ENCODE measurements at regions of chr17 and their contacts with region 1.

Region 1: DNA sequence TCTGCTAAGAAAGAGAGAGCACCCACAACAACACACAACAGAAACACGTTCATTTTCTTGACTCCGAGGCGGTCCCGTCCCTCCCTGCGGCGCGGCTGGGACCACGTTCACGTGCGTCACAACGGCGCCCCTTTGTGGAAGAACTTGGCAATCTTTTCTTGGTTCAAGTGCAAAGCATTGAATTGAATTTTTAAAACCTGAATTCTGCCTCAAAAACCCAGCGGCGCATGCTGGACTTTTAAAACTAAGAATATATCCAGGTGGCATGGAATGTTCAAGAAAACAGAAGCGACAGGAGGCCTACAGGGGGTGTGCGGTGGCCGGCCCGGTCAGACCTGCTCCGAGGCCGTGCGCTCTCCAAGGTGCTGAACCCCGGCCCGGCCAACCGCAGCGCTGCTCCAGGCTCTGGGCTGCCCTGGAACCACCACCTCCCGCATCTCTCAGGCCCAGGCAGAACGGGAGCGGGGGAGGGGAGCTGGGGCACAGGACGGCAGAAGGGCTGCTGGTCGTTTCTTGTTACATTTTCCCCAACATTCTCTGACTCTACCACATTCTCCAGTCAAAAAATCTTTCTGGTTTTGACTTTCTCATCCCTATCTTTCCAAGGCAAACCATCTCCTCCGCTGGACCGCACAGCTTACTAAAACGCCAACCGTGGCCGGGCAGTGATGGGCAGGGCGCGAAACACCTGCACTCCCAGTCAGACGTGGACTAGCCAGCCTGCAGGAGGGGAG is 3.4 kb upstream of the HEXD start:
- DNase-seq: peak; percentile 86
- ATAC-seq: peak; percentile 28
- H3K4me3 Mint-ChIP-seq: no peak overlapping the region
- H3K27ac Mint-ChIP-seq: no peak overlapping the region
- H3K4me1 Mint-ChIP-seq: peaks cover 16% of the 10 kb centered on the region
- H3K27me3 Mint-ChIP-seq: no peaks in the 10 kb centered on the region

Region 2: GRCh38 chr17:82350182-82351030 is 64.3 kb before region 1 on chr17:
- CTCF ChIA-PET with region 1: interaction called, 16 read pairs
- DNase-seq: peak; percentile 64
- ATAC-seq: peak; percentile 48
- H3K4me3 Mint-ChIP-seq: no peak overlapping the region
- H3K27ac Mint-ChIP-seq: no peak overlapping the region
- H3K4me1 Mint-ChIP-seq: peaks cover 18% of the 10 kb centered on the region
- H3K27me3 Mint-ChIP-seq: peaks cover 18% of the 10 kb centered on the region

Measured in activated CD8-positive, alpha-beta memory T cell treated with anti-CD3 and anti-CD28 coated beads, Interleukin-2, amount 10 ng/mL, durations not matched to agents 7 days and 5 days (primary cell).